Esophagus muscularis mucosa (tissue), 4 donors: ENCODE measurements at regions of chr9 and their contacts with region 1.

Region 1: GRCh38 chr9:76297721-76298239 is 96.4 kb downstream of the RFK start:
- DNase-seq: no peak
- H3K4me3 ChIP-seq: peak overlapping the region in 3 of 4 donors; percentile 10 to 15 (median 14)
- H3K27ac ChIP-seq: peak overlapping the region; percentile 30 to 55 (median 50)
- H3K4me1 ChIP-seq: peaks cover 0 to 26% (median 21%) of the 10 kb centered on the region in 4 donors
- H3K27me3 ChIP-seq: no peaks in the 10 kb centered on the region
- CTCF ChIP-seq: no peak
- EP300 ChIP-seq: no peak
- POLR2A ChIP-seq: no peak

Region 2: DNA sequence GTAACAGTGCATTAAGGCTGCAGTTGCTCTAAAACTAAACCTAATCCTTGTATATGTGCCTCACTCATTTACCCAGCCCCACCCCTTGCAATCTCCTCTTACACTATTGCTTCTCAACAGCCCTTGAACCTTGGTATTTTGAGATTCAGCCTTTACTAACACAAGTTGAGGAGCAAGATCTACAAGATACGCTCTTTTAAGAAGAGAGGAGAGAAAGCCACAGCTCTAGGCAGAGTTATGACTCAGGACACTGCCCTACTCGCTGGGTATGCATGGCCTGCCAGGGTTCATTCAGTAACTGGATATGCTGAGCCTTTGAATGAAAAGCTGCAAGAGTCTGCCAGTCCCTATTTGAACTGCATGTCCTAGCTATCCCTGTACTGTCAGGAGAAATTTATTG is 187.8 kb before region 1 on chr9:
- intact Hi-C with region 1: loop called (anchors 10 kb)
- DNase-seq: no peak
- H3K4me3 ChIP-seq: no peak overlapping the region
- H3K27ac ChIP-seq: no peak overlapping the region
- H3K4me1 ChIP-seq: peaks cover 0 to 43% (median 34%) of the 10 kb centered on the region in 4 donors
- H3K27me3 ChIP-seq: no peaks in the 10 kb centered on the region
- CTCF ChIP-seq: no peak
- EP300 ChIP-seq: no peak
- POLR2A ChIP-seq: no peak

Region 3: DNA sequence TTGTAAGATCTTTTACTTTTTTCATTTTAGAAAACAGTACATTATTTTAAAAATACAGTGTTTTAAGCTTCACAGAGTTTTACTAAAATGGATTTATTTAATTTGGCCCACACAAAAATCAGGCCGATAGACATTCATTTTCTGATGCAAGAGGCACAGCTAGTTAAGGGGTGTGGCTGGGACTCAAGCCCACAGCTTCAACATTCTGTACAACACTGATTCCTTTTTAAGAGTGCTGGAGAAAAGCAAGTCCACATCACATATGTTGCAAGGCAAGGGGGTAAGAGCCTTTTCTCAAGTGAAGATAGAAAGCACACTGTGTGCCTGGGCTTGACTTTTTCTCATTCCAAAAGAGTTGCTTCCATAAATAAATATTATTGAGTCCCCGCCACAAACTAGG is 99.4 kb before region 1 on chr9:
- intact Hi-C with region 1: loop called (anchors 10 kb)
- DNase-seq: no peak
- H3K4me3 ChIP-seq: no peak overlapping the region
- H3K27ac ChIP-seq: no peak overlapping the region
- H3K4me1 ChIP-seq: no peaks in the 10 kb centered on the region
- H3K27me3 ChIP-seq: no peaks in the 10 kb centered on the region
- CTCF ChIP-seq: no peak
- EP300 ChIP-seq: no peak
- POLR2A ChIP-seq: no peak

Region 4: GRCh38 chr9:76490249-76490990 is 192.6 kb after region 1 on chr9:
- intact Hi-C with region 1: no loop called
- DNase-seq: no peak
- H3K4me3 ChIP-seq: no peak overlapping the region
- H3K27ac ChIP-seq: no peak overlapping the region
- H3K4me1 ChIP-seq: no peaks in the 10 kb centered on the region
- H3K27me3 ChIP-seq: no peaks in the 10 kb centered on the region
- CTCF ChIP-seq: no peak
- EP300 ChIP-seq: no peak
- POLR2A ChIP-seq: no peak